Activated T-helper 1 cell treated with anti-CD3 and anti-CD28 coated beads, Interleukin-12 subunit alpha, Interleukin-12 subunit beta, Interleukin-2, Interleukin-4 antibody, amounts not matched to agents 30 ng/mL and 10 ng/mL and 1 ng/mL, durations not matched to agents 14 hours and 24 hours and 36 hours (primary cell): ENCODE measurements at regions of chr17 and their contacts with region 1.

Region 1: GRCh38 chr17:69523244-69523861 is 108.9 kb downstream of the MAP2K6 start:
- DNase-seq: no peak
- H3K4me3 Mint-ChIP-seq: no peak overlapping the region
- H3K27ac Mint-ChIP-seq: no peak overlapping the region
- H3K4me1 Mint-ChIP-seq: peaks cover 7% of the 10 kb centered on the region
- H3K27me3 Mint-ChIP-seq: no peaks in the 10 kb centered on the region

Region 2: GRCh38 chr17:68771867-68772515 is 751.4 kb before region 1 on chr17:
- intact Hi-C with region 1: loop called (anchors 10 kb)
- DNase-seq: no peak
- H3K4me3 Mint-ChIP-seq: peak overlapping the region; percentile 56
- H3K27ac Mint-ChIP-seq: no peak overlapping the region
- H3K4me1 Mint-ChIP-seq: peaks cover 12% of the 10 kb centered on the region
- H3K27me3 Mint-ChIP-seq: no peaks in the 10 kb centered on the region

Region 3: GRCh38 chr17:69302682-69303081 is 220.7 kb before region 1 on chr17:
- intact Hi-C with region 1: no loop called
- DNase-seq: no peak
- H3K4me3 Mint-ChIP-seq: no peak overlapping the region
- H3K27ac Mint-ChIP-seq: no peak overlapping the region
- H3K4me1 Mint-ChIP-seq: no peaks in the 10 kb centered on the region
- H3K27me3 Mint-ChIP-seq: no peaks in the 10 kb centered on the region

Region 4: DNA sequence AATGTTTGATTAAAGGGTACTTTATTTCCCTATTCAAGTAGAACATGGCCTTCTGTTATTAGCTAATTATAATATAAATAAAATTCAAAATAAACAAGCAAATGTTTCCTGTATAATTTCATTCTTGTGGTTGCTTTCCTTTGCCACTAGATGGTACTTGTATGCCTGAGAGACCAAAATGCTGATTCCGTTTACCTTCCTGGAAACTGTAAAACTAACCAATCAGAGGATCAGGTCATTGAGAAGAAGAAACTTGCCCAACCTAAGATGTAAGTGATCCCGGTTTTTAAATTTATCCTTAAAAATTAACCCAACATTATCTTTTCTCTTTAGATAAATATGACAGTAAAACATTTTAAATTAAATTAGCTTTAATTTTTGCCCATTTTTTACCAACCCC is 188.3 kb before region 1 on chr17:
- intact Hi-C with region 1: loop called (anchors 1 kb)
- DNase-seq: no peak
- H3K4me3 Mint-ChIP-seq: no peak overlapping the region
- H3K27ac Mint-ChIP-seq: no peak overlapping the region
- H3K4me1 Mint-ChIP-seq: no peaks in the 10 kb centered on the region
- H3K27me3 Mint-ChIP-seq: peaks cover 18% of the 10 kb centered on the region

Region 5: DNA sequence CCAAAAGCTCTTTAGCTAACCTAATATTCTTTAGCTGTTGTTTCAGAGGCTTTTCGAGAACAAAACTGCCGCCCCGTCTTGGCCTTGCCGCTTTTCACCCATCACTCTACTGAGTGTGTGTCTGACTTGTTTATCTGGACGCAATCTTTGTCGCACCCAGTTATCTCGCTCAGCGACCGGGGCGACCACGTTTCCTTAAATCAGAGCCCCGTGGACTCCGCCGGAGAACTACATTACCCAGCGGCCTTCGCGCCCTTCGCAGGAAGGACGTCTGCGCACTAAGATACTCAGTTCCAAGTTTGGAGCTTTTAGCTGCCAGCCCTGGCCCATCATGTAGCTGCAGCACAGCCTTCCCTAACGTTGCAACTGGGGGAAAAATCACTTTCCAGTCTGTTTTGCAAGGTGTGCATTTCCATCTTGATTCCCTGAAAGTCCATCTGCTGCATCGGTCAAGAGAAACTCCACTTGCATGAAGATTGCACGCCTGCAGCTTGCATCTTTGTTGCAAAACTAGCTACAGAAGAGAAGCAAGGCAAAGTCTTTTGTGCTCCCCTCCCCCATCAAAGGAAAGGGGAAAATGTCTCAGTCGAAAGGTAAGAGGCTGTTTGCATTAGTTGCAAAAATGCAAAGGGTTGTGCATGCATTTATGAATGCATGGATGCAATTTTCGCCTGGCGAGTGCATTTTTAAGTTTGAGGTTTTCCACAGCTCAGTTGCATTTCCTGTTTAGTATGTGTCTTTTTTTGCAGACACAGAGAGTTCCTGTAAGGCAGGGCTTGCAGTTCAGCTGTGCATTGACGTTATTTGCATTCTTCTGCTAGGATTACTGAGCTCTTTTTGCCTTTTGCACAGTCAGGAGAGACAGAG is 108.7 kb before region 1 on chr17 and contains the start of gene MAP2K6:
- intact Hi-C with region 1: loop called (anchors 10 kb)
- DNase-seq: peak; percentile 67
- H3K4me3 Mint-ChIP-seq: no peak within 1 kb of the TSS
- H3K27ac Mint-ChIP-seq: no peak within 1 kb of the TSS
- H3K4me1 Mint-ChIP-seq: peaks cover 10% of the 10 kb centered on the region
- H3K27me3 Mint-ChIP-seq: no peaks in the 10 kb centered on the region
- total RNA-seq, gene MAP2K6: 0.88 and 1.7 TPM in 2 replicates

Region 6: DNA sequence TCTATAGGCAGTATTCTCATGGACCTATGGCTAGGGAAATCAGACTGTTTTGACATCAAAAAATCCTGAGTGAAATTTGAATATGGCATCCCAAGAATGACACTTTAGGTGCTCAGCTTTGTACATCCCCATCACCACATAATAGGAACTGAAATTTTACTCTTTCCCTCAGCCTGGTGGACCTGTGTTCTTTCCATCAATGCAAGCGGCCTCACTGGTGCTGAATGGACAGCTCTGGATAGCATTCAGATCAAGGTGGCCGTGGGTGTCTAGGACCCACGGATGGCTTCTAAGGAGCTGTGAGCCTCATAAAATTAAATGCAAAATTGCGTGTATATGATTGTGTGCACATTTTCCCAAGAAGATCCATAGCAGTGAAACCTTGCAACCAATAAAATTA is 43.8 kb after region 1 on chr17:
- intact Hi-C with region 1: no loop called
- DNase-seq: no peak
- H3K4me3 Mint-ChIP-seq: no peak overlapping the region
- H3K27ac Mint-ChIP-seq: no peak overlapping the region
- H3K4me1 Mint-ChIP-seq: peaks cover 11% of the 10 kb centered on the region
- H3K27me3 Mint-ChIP-seq: peaks cover 2% of the 10 kb centered on the region

Region 7: DNA sequence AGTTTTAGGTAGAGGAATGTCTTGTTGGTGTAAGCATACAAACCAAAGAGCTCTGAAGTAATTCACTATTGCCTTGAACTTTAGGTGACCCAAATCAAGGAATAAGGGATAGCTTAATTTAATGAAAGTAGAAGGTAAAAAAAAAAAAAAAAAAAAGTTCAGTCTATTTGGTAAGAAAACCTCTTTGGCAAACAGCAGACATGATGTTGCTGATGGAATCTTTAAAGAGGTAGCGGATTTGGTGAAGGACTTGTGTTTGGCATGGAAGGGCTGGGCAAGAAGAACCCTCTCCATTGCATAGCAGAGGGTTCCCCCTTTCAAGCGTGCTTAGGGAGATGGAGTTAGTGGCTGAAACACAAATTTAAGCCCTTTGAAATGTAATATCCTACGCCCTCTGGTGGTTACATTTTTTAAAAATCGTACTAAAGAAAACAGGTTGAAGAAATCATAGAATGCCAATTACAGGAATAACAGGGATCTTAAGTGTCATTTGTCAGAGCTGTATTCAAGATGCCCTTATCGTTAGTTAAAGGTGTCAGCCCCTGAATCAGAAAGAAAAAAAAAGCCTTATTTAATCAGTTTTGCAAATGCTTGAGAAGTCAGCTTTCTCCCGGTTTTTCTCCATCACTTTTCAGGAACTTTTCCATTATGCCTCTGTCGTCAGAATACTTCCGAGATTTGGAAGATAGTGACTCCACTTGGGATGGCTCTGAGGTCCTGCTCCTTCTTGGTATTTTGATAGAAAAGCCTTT is 1029.1 kb after region 1 on chr17:
- intact Hi-C with region 1: loop called (anchors 10 kb)
- DNase-seq: no peak
- H3K4me3 Mint-ChIP-seq: no peak overlapping the region
- H3K27ac Mint-ChIP-seq: no peak overlapping the region
- H3K4me1 Mint-ChIP-seq: no peaks in the 10 kb centered on the region
- H3K27me3 Mint-ChIP-seq: no peaks in the 10 kb centered on the region